ENCODE measurements at regions of chr19 and their contacts with region 1.

Region 1: GRCh38 chr19:55580628-55581144 is at the start of gene ZNF579:
- DNase-seq: peak; percentile 80
- ATAC-seq: peak; percentile 64
- H3K4me3 ChIP-seq: peak within 1 kb of the TSS; percentile 88 to 97 (median 95)
- H3K27ac ChIP-seq: peak within 1 kb of the TSS; percentile 79
- H3K4me1 ChIP-seq: peaks cover 43% of the 10 kb centered on the region
- H3K27me3 ChIP-seq: no peaks in the 10 kb centered on the region
- CTCF ChIP-seq: no peak; the same call in 1 of the 2 replicates
- EP300 ChIP-seq: peak in 1 of 2 experiments; percentile 29; a peak in 1 of 4 replicates
- POLR2A ChIP-seq: peak in 1 of 2 experiments; percentile 23; a peak in 2 of 4 replicates
- RAD21 ChIP-seq: no peak
- total RNA-seq, gene ZNF579: 1.7 and 2.9 TPM in 2 replicates

Region 2: GRCh38 chr19:55549500-55550320 is 31.0 kb before region 1 on chr19:
- CTCF ChIA-PET with region 1: no interaction called
- POLR2A ChIA-PET with region 1: interaction called, 11 read pairs
- in situ Hi-C with region 1: no loop called
- intact Hi-C with region 1: loop called (anchors 2 kb)
- DNase-seq: peak; percentile 64
- ATAC-seq: peak; percentile 32
- H3K4me3 ChIP-seq: peak overlapping the region; percentile 55 to 80 (median 66)
- H3K27ac ChIP-seq: peak overlapping the region; percentile 47
- H3K4me1 ChIP-seq: peaks cover 79% of the 10 kb centered on the region
- H3K27me3 ChIP-seq: no peaks in the 10 kb centered on the region; a peak in 1 of 5 replicates
- CTCF ChIP-seq: 0 out of 2 replicates have a peak, but pooled peaks have one; percentile 28
- EP300 ChIP-seq: no peak
- POLR2A ChIP-seq: no peak
- RAD21 ChIP-seq: no peak

Measured in HepG2 (cell line).